WTC11 (cell line): ENCODE measurements at regions of chr20 and their contacts with region 1.

Region 1: GRCh38 chr20:34190679-34191090 is 50.5 kb upstream of the ASIP start:
- DNase-seq: peak; percentile 82
- ATAC-seq: peak; percentile 99
- H3K4me3 Mint-ChIP-seq: no peak overlapping the region
- H3K27ac Mint-ChIP-seq: no peak overlapping the region
- H3K4me1 Mint-ChIP-seq: peaks cover 22% of the 10 kb centered on the region
- H3K27me3 Mint-ChIP-seq: no peaks in the 10 kb centered on the region
- CTCF ChIP-seq: peak; percentile 49; the same call in 1 of the 2 replicates

Region 2: GRCh38 chr20:34249291-34249690 is 58.6 kb after region 1 on chr20:
- CTCF ChIA-PET with region 1: interaction called, 56 read pairs
- POLR2A ChIA-PET with region 1: no interaction called
- DNase-seq: no peak
- ATAC-seq: no peak
- H3K4me3 Mint-ChIP-seq: no peak overlapping the region
- H3K27ac Mint-ChIP-seq: no peak overlapping the region
- H3K4me1 Mint-ChIP-seq: peaks cover 8% of the 10 kb centered on the region
- H3K27me3 Mint-ChIP-seq: no peaks in the 10 kb centered on the region
- CTCF ChIP-seq: no peak

Region 3: DNA sequence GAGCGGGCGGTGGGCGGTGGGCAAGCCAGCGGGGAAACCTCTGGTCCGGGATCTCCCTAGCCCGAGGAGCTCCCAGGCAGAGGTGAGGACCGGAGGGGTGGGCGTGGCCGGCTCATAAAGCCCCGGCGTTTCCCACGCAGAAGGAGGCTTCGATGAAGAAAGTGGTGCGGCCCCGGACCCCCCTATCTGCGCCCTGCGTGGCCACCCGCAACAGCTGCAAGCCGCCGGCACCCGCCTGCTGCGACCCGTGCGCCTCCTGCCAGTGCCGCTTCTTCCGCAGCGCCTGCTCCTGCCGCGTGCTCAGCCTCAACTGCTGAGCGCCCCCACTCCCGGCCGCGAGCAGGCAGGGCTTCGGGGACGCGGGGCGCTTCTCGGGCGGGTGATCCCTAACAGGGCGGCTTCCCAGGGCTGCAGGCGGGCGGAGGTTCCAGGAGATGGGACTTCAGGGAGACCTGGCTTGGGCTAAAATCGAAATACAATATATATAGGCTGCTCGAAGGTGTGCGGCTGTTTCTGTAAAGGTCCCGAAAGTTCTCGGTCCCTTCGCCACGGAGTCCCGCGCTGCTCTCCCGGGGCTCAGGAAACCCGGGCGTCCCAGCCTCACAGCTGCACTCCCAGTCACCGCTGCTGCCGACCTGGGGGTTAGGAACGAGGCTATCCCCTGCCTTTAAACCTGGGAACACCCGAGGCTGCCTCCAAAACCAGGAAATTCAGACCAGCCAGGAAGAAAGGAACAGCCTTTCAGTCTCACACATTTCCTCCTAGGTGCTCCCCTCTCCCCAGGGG is 78.4 kb after region 1 on chr20:
- CTCF ChIA-PET with region 1: interaction called, 33 read pairs
- POLR2A ChIA-PET with region 1: interaction called, 3 read pairs
- DNase-seq: peak; percentile 63
- ATAC-seq: peak; percentile 65
- H3K4me3 Mint-ChIP-seq: peak overlapping the region; percentile 64
- H3K27ac Mint-ChIP-seq: no peak overlapping the region
- H3K4me1 Mint-ChIP-seq: peaks cover 3% of the 10 kb centered on the region; the same call in 1 of the 2 replicates
- H3K27me3 Mint-ChIP-seq: peaks cover 7% of the 10 kb centered on the region
- CTCF ChIP-seq: no peak

Region 4: GRCh38 chr20:34350095-34350494 is 159.4 kb after region 1 on chr20:
- CTCF ChIA-PET with region 1: no interaction called
- POLR2A ChIA-PET with region 1: no interaction called
- DNase-seq: no peak
- ATAC-seq: no peak
- H3K4me3 Mint-ChIP-seq: no peak overlapping the region
- H3K27ac Mint-ChIP-seq: 0 out of 2 replicates have a peak overlapping the region, but pooled peaks have one; percentile 32
- H3K4me1 Mint-ChIP-seq: peaks cover 10% of the 10 kb centered on the region
- H3K27me3 Mint-ChIP-seq: no peaks in the 10 kb centered on the region
- CTCF ChIP-seq: no peak

Region 5: DNA sequence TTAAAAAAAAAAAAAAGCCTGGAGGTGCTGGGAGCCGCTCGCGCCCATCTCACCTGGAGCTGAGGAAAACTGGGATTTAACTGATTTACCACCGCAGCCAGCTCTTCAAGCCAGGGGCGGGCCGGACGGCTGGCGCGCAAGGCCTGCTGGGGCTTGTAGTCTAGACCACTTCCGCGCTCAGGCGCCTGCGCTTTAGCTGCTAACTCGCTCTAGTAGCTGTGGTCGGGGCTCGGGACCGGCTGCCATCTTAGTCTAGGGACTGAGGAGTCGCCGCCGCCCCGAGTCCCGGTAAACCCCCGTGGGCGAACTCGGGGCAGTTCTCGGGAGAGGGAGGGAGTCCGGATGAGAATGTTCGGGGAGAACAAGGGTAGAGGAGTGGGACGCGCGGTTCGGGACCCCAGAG is 172.4 kb after region 1 on chr20 and contains the start of gene ITCH:
- CTCF ChIA-PET with region 1: interaction called, 11 read pairs
- POLR2A ChIA-PET with region 1: no interaction called
- DNase-seq: peak; percentile 97
- ATAC-seq: peak; percentile 98
- H3K4me3 Mint-ChIP-seq: peak within 1 kb of the TSS; percentile 96
- H3K27ac Mint-ChIP-seq: peak within 1 kb of the TSS; percentile 99
- H3K4me1 Mint-ChIP-seq: peaks cover 26% of the 10 kb centered on the region
- H3K27me3 Mint-ChIP-seq: no peaks in the 10 kb centered on the region; the same call in 1 of the 2 replicates
- CTCF ChIP-seq: no peak
- total RNA-seq, gene ITCH: 35.8 to 43.4 TPM (median 36.4 TPM) in 3 replicates

Region 6: GRCh38 chr20:34544109-34544793 is 353.6 kb after region 1 on chr20:
- CTCF ChIA-PET with region 1: interaction called, 12 read pairs
- POLR2A ChIA-PET with region 1: no interaction called
- DNase-seq: peak; percentile 48
- ATAC-seq: peak; percentile 89
- H3K4me3 Mint-ChIP-seq: peak overlapping the region; percentile 56
- H3K27ac Mint-ChIP-seq: no peak overlapping the region; the same call in 1 of the 2 replicates
- H3K4me1 Mint-ChIP-seq: peaks cover 13% of the 10 kb centered on the region
- H3K27me3 Mint-ChIP-seq: 0 out of 2 replicates have a peak, but pooled peaks cover 3% of the 10 kb centered on the region
- CTCF ChIP-seq: no peak